Heart left ventricle (tissue), 16 donors: ENCODE measurements at regions of chr13 and their contacts with region 1.

Region 1: DNA sequence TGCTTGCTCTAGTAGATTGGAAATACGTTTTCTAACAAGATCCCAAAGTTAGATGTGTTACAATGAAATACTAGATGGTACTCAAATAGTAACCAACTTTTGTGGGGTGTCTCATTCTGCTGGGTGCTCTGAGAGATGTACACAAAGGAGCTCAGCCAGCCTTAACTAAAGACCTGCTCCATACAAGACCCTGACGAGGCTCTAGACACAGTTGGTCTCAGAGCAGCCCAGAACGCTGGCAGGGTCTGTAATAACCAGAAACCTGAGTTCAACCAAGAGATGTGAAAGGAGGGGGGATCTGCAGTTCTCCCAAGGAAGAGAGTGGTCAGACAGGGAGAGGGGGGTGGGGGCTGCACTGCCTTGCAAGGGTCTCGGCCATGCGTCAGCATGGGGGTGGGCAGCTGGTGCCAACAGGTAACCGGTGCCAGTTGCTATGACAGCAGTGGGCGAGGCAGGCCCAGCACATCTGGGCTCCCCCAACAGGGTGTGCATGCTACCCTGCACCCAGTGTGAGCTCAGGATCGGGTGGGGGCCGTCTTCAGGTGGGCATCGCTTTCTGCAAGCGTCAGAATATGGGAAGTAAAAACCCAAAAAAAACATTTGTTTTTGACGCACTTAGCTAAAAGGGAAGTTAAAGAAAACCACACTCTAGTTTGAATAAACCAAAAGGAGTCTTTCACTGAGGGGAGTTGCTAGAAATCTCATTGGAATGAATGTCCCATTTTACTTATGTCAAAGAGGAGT is 68.0 kb upstream of the GPR183 start:
- DNase-seq: peak in 3 of 5 donors; percentile 34 to 61 (median 46)
- ATAC-seq: peak; percentile 38 to 66 (median 48)
- H3K4me3 ChIP-seq: no peak overlapping the region
- H3K27ac ChIP-seq: peak overlapping the region in 2 of 12 donors; percentile 25 to 77
- H3K4me1 ChIP-seq: peaks cover 0 to 46% (median 0%) of the 10 kb centered on the region in 12 donors
- H3K27me3 ChIP-seq: no peaks in the 10 kb centered on the region
- CTCF ChIP-seq: no peak
- POLR2A ChIP-seq: no peak

Region 2: DNA sequence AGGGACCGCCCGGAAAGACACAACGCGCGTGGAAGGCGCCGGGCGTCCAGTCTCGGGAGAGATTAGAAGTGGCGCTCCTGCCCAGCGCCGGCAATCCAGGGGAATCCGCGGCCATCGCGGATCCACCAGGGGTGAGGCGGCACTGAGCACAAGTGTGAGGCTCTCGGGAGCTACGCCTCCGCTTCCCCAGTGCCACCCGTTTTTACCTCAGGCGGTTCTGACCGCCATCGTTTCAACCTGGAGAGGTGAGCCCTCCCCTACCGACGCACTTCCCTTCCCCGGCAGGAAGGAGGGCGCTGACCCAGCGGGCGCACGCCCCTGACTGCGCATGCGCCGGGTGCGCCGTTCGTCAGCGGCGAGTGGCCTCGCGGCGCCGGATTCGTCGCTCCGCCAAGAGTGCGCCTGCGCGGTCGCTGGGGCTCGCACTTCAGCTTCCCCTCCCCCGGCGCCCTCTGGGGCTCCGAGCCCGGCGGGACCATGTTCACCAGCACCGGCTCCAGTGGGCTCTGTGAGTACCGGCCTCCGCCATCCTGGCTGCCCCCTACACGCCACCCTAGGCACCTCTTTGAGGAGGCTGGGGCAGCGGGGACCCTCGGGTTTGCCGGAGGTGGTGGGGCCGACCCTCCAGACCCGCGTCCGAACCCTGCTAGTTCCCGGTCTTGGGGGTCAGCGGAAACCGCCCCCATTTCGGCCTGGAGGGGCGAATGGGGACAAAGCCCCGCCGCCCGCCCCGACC is 174.6 kb before region 1 on chr13 and contains the start of gene UBAC2:
- intact Hi-C with region 1: loop called in 1 of 10 experiments (anchors 10 kb)
- DNase-seq: peak; percentile 95 to 99 (median 97)
- ATAC-seq: peak; percentile 86 to 98 (median 94)
- H3K4me3 ChIP-seq: peak within 1 kb of the TSS; percentile 80 to 100 (median 92)
- H3K27ac ChIP-seq: peak within 1 kb of the TSS; percentile 88 to 98 (median 96)
- H3K4me1 ChIP-seq: peaks cover 0 to 48% (median 31%) of the 10 kb centered on the region in 12 donors
- H3K27me3 ChIP-seq: no peaks in the 10 kb centered on the region
- CTCF ChIP-seq: peak in 2 of 12 donors; percentile 15 to 23
- POLR2A ChIP-seq: peak; percentile 55 to 92
- total RNA-seq, gene UBAC2: 32.6 to 55.5 (median 48.5) TPM

Region 3: DNA sequence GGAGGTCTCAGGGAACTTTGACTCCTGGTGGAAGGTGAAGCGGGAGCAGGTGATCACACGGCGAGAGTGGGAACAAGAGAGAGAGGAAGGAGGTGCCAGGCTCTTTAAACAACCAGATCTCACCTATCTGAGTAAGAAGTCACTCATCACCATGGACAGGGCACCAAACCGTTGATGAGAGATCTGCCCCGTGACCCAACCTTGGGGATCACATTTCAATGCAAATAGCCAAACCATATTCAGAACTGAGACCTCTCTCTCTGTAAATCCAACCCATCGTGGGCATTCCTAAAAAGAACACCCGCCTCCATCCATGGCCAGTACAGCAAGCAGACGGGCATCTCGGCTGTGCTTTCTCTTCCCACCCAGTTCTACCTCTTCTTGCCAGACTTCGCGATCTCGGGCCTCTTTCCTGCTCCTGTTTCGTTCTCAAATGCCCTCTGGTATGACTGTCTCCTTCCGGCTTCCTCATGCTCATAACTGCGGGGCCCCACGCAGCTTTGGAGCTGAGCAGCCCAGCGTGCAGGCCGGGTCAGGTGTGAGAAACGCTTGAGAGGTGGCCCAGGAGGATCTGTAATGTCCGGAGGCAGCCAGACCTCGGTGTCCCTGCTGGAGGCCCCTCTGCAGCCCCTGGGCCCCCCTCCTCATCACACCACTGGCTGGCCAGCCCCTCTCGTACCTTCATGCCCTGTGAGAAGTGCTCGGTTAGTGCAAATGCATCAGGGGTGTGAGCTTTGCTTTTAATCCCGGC is 29.0 kb after region 1 on chr13:
- intact Hi-C with region 1: no loop called
- DNase-seq: no peak
- ATAC-seq: peak in 1 of 4 donors; percentile 37
- H3K4me3 ChIP-seq: no peak overlapping the region
- H3K27ac ChIP-seq: no peak overlapping the region
- H3K4me1 ChIP-seq: peaks cover 0 to 23% (median 0%) of the 10 kb centered on the region in 12 donors
- H3K27me3 ChIP-seq: no peaks in the 10 kb centered on the region
- CTCF ChIP-seq: no peak
- POLR2A ChIP-seq: no peak

Region 4: DNA sequence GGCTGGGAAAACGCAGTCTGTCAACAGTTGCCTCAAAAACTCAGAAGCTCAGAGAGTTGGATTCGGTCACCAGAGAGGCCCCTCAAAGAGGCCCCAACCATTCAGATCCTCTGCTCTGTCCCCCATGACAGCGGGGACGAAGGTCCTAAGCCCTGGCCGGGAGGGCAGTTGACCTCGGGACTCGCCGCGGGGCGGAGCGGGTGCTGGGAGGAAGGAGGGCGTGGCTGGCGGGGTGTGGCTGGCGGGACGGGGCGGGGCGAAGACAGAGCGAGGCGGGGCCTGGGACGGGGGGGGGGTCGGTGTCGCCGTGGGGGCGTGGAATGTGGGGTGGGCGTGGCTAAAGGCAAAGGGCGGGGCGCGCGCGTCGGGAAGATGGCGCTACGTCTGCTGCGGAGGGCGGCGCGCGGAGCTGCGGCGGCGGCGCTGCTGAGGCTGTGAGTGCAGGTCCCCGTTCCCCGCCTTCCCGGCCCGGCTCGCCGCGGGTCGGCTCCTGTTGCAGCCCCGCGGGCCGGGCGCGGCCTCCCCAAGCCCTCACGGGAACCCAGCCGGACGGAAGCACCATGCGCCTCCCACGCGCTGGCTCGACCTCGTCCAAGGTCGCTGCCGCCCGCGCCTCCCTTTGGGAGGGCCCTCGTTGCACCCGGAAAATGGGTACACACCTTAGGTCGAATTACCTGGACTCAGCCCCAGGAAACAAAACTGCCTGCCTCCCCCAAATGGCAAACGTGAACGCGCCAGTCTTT is 231.3 kb after region 1 on chr13:
- intact Hi-C with region 1: no loop called
- DNase-seq: peak; percentile 91 to 97 (median 93)
- ATAC-seq: peak; percentile 94 to 98 (median 98)
- H3K4me3 ChIP-seq: peak within 1 kb of the TSS; percentile 43 to 90 (median 71)
- H3K27ac ChIP-seq: peak within 1 kb of the TSS in 11 of 12 donors; percentile 76 to 91 (median 85)
- H3K4me1 ChIP-seq: peaks cover 0 to 18% (median 9%) of the 10 kb centered on the region in 12 donors
- H3K27me3 ChIP-seq: no peaks in the 10 kb centered on the region
- CTCF ChIP-seq: peak in 1 of 12 donors; percentile 11
- POLR2A ChIP-seq: peak; percentile 35 to 91